GM10248 (cell line): ENCODE measurements at regions of chr3 and their contacts with region 1.

Region 1: GRCh38 chr3:122074621-122075265 is 19.6 kb downstream of the CD86 start:
- DNase-seq: peak; percentile 73
- CTCF ChIP-seq: no peak

Region 2: DNA sequence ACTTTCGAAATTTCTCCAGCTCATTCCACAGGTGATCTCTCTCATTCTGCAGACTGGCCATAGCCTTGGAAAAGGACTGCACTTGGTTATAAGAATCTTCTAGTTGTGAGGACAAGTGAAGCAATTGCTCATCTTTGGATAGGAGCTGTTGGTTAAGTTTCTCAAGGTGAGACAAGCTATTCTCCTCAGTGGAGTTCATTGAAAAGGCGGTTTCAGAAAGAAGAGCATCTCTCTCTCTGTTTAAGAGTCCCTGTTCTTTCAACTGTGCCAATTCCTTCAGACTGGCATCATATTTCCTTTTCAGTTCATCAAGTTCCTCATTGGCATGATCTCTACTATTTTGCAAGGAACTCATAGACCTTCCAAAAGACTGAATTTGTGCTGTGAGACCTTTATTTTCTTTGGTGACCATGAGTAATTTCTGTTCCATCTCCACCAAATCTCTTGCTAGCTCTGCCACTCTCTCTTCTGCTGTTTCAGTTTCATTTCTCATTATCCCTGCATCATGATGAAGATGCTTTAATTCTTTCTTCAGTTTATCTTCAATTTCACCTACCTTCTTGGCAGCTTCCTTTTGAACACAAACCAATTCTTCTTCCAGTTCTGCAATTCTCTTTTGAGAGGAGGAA is 383.9 kb before region 1 on chr3:
- CTCF ChIA-PET with region 1: no interaction called
- POLR2A ChIA-PET with region 1: no interaction called
- DNase-seq: peak; percentile 42
- CTCF ChIP-seq: no peak

Region 3: GRCh38 chr3:122092460-122093165 is 17.9 kb after region 1 on chr3:
- CTCF ChIA-PET with region 1: interaction called, 92 read pairs
- POLR2A ChIA-PET with region 1: no interaction called
- DNase-seq: no peak
- CTCF ChIP-seq: peak; percentile 71

Region 4: DNA sequence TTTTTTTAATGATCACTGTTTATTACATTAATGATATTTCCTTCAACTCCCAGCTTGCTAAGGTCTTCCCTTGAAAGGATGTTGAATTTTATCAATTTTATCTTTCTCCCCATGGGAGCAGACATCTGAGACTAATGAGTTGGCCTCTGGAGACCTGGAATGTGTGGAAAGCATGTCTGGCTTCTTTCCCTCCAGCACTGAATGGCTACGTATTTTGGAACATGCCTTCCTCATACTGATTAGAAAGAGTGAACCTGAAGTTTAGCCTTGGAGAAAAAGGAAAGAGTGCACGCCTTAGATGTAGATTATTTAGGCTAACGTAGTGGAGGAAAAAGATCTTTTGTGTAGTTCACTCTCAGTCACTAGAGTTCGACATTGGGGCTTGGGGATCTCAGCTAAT is 133.8 kb after region 1 on chr3:
- CTCF ChIA-PET with region 1: no interaction called
- POLR2A ChIA-PET with region 1: no interaction called
- DNase-seq: no peak
- CTCF ChIP-seq: no peak